Esophagus squamous epithelium (tissue), 5 donors: ENCODE measurements at regions of chr7 and their contacts with region 1.

Region 1: DNA sequence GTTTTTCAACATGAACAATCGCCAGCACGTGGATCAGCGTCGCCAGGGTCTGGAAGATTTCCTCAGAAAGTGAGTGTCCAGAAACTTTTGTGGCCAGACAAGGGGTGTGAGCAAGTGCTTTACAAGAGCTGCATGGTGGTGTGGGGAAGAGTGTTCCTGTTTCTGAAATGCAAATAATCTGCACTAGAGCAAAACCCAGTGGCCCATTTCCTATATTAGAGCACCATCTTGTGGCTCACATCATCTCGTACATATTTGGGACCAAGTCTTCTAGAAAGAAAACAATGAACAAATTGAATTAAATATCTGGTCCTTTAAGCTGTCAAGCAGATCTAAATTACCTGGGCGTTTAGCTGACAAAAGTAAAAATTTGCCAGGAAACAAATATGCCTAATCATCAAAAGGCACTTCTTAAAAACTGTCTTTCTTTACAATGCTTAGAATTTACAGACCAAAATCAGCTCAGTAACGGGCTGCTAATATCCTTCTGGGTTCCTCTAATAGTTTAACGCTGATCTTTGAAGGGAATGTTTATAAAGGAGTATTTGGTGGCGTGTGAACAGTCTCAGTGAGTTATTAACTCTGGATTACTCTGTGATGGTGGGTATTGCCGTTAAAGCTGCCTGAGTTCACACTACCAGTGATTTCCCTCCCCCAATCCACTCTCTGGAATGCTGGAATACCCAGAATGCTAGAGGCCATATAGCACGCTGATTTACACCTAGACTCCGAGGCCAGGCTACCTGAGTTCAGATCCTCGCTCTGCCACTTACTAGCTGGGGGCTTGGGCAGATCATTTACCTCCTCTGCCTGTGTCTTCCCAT is 73.6 kb downstream of the SNX10 start:
- DNase-seq: no peak
- H3K4me3 ChIP-seq: no peak overlapping the region
- H3K27ac ChIP-seq: no peak overlapping the region
- H3K4me1 ChIP-seq: peaks cover 0 to 7% (median 0%) of the 10 kb centered on the region in 3 donors
- H3K27me3 ChIP-seq: peaks cover 0 to 16% (median 0%) of the 10 kb centered on the region in 4 donors
- CTCF ChIP-seq: peak; percentile 47 to 90 (median 76)
- POLR2A ChIP-seq: no peak

Region 2: GRCh38 chr7:25968205-25968993 is 396.9 kb before region 1 on chr7:
- intact Hi-C with region 1: no loop called
- DNase-seq: no peak
- H3K4me3 ChIP-seq: no peak overlapping the region
- H3K27ac ChIP-seq: peak overlapping the region in 1 of 4 donors; percentile 62
- H3K4me1 ChIP-seq: peaks cover 0 to 19% (median 4%) of the 10 kb centered on the region in 3 donors
- H3K27me3 ChIP-seq: peaks cover 0 to 66% (median 0%) of the 10 kb centered on the region in 4 donors
- CTCF ChIP-seq: no peak
- POLR2A ChIP-seq: no peak

Region 3: DNA sequence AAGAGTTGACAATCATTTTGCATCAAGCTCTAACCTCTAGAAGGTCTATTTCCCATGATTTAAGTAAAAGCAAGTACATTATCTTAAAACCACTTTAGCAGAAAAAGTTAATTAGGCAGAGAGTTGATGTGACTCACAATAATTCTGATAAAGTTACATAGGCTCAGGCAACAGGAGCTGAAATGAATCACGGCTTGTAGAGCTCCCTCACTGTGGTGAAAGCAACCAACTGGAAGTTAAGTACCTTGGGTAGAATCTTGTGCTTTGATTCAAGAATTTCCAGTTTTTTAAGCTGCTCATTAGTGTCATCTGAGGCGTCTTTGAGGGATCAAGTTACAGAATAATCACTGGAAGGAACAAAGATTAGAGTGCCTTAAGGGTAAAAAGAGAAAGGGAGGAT is 282.2 kb before region 1 on chr7:
- intact Hi-C with region 1: loop called (anchors 10 kb)
- DNase-seq: no peak
- H3K4me3 ChIP-seq: no peak overlapping the region
- H3K27ac ChIP-seq: no peak overlapping the region
- H3K4me1 ChIP-seq: peaks cover 0 to 28% (median 6%) of the 10 kb centered on the region in 3 donors
- H3K27me3 ChIP-seq: peaks cover 0 to 43% (median 0%) of the 10 kb centered on the region in 4 donors
- CTCF ChIP-seq: no peak
- POLR2A ChIP-seq: no peak

Region 4: GRCh38 chr7:26549281-26549943 is 184.1 kb after region 1 on chr7:
- intact Hi-C with region 1: no loop called
- DNase-seq: no peak
- H3K4me3 ChIP-seq: no peak overlapping the region
- H3K27ac ChIP-seq: peak overlapping the region in 2 of 4 donors; percentile 20 to 59
- H3K4me1 ChIP-seq: no peaks in the 10 kb centered on the region
- H3K27me3 ChIP-seq: peaks cover 0 to 28% (median 0%) of the 10 kb centered on the region in 4 donors
- CTCF ChIP-seq: no peak
- POLR2A ChIP-seq: no peak

Region 5: GRCh38 chr7:26627891-26628341 is 262.6 kb after region 1 on chr7:
- intact Hi-C with region 1: no loop called
- DNase-seq: no peak
- H3K4me3 ChIP-seq: no peak overlapping the region
- H3K27ac ChIP-seq: no peak overlapping the region
- H3K4me1 ChIP-seq: no peaks in the 10 kb centered on the region
- H3K27me3 ChIP-seq: no peaks in the 10 kb centered on the region
- CTCF ChIP-seq: no peak
- POLR2A ChIP-seq: no peak